ENCODE measurements at regions of chr1 and their contacts with region 1.

Region 1: GRCh38 chr1:84758968-84759491 is 68.8 kb upstream of the SSX2IP start:
- DNase-seq: no peak
- H3K4me3 ChIP-seq: peak overlapping the region; percentile 9
- H3K27me3 ChIP-seq: 0 out of 2 replicates have a peak, but pooled peaks cover 2% of the 10 kb centered on the region
- CTCF ChIP-seq: no peak

Region 2: GRCh38 chr1:84772428-84772943 is 13.5 kb after region 1 on chr1:
- CTCF ChIA-PET with region 1: interaction called, 66 read pairs
- POLR2A ChIA-PET with region 1: no interaction called
- DNase-seq: peak; percentile 18
- H3K4me3 ChIP-seq: no peak overlapping the region
- H3K27me3 ChIP-seq: no peaks in the 10 kb centered on the region; the same call in 1 of the 2 replicates
- CTCF ChIP-seq: peak; percentile 93

Region 3: DNA sequence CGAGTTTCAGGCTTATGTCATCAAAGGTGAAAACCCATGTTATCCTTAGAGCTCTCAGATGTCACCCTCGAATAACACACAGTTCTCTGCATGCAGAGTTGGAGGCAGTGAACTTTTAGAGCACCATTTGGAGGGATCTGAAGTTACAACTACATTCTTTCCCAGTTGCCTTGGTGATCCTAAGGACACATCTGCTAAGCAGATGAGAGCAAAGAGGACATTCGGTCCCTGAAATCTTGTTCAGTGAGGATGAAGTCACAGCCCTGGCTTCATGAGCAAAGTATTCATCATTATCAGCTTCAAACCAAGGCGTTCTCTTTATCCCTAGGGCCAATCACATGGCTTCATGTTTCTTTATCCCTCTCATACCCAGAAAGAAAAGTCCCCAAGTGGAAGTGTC is 261.0 kb after region 1 on chr1:
- CTCF ChIA-PET with region 1: no interaction called
- POLR2A ChIA-PET with region 1: no interaction called
- DNase-seq: peak; percentile 91
- H3K4me3 ChIP-seq: no peak overlapping the region
- H3K27me3 ChIP-seq: no peaks in the 10 kb centered on the region; the same call in none of the 2 replicates
- CTCF ChIP-seq: no peak

Measured in BJ (cell line).